ENCODE measurements at regions of chr11 and their contacts with region 1.

Region 1: DNA sequence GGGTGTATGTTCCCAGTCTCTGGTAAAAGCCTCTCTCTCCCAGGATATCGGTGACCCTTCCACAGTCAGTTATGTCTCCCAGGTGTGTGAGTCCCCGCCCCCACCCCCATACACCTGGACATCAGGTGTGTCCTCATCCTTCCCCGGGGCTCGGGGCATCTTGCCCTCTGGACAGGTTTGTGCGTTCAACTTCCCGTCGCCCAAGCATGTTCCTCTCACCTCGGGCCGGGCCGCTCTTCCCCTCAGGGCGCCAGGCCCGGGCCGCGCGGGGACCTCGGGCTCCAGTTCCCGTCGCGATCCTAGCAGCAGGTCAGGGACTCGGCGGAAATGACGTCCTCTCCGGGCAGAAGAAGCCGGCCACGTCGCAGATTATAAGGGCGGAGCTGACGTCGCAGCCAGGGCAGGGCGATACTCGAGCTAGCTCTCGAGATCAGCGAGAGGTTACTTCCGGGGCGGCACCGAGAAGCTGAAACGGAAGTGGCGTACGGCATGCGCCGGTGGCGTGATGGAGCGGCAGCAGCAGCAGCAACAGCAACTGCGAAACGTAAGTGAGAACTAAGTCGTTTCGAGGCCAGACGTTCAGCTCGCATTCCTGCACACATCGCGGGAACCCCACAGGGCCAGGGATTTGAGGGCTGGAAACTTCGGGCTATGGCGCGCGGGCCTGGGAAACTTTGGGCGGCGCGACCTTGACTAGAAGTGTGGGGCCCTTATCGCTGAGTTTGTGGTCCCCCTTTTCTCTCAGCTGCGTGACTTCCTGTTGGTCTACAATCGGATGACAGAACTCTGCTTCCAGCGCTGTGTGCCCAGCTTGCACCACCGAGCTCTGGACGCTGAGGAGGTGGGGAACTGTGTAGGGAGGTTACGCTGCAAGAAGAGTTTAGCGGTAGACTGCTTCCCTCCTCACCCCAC is at the starts of genes ARFIP2 and TIMM10B:
- DNase-seq: peak; percentile 97
- H3K4me3 Mint-ChIP-seq: peak within 1 kb of the TSS; percentile 94
- H3K27ac Mint-ChIP-seq: peak within 1 kb of the TSS; percentile 94
- H3K4me1 Mint-ChIP-seq: peaks cover 40% of the 10 kb centered on the region
- H3K27me3 Mint-ChIP-seq: no peaks in the 10 kb centered on the region
- total RNA-seq, gene ARFIP2: 51.5 and 53.8 TPM in 2 replicates
- total RNA-seq, gene TIMM10B: 38.8 and 42.7 TPM in 2 replicates

Region 2: DNA sequence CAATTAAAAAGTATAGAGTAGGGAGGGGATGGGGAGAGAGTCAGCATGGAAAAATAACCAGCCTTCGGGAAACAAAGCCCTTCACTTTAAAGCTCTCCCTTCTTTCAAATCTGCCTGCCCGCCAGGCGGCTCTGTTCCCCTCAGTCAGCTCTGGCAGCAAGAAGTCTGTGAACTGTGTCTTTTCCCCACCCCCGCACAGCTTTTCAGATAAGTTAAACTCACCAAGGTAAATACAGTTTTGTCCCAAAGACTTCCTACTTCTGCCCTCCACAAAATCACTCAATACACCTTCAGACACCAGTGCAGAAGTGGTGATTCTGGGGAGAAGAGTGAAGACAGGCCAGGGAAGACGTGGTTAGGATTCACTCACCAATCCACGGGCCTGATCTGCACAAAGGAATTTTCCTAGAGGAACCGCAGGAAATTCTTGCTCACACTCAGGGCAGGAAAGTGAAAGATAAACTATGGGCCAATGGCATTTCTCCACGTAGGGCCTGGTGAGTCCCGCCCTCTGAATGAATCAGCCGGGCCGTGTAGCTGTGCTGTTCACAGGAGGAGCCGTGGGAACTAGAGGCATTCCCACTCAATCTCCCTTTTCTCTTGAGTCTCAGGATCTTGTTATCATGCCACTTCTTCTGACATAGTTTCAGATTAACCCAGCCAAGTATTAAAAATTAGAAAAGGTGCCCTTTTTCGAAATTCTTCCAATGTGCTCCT is 796.5 kb before region 1 on chr11 and contains the start of gene TRIM5:
- intact Hi-C with region 1: loop called (anchors 5 kb)
- DNase-seq: peak; percentile 74
- H3K4me3 Mint-ChIP-seq: peak within 1 kb of the TSS; percentile 89
- H3K27ac Mint-ChIP-seq: peak within 1 kb of the TSS; percentile 96
- H3K4me1 Mint-ChIP-seq: peaks cover 57% of the 10 kb centered on the region
- H3K27me3 Mint-ChIP-seq: no peaks in the 10 kb centered on the region
- total RNA-seq, gene TRIM5: 7.9 and 8.6 TPM in 2 replicates

Region 3: GRCh38 chr11:5851002-5851401 is 630.3 kb before region 1 on chr11:
- intact Hi-C with region 1: no loop called
- DNase-seq: no peak
- H3K4me3 Mint-ChIP-seq: no peak overlapping the region
- H3K27ac Mint-ChIP-seq: no peak overlapping the region
- H3K4me1 Mint-ChIP-seq: no peaks in the 10 kb centered on the region
- H3K27me3 Mint-ChIP-seq: peaks cover 1% of the 10 kb centered on the region

Region 4: GRCh38 chr11:6389921-6390724 is 91.1 kb before region 1 on chr11 and contains the start of gene SMPD1:
- intact Hi-C with region 1: loop called (anchors 1 kb)
- DNase-seq: peak; percentile 89
- H3K4me3 Mint-ChIP-seq: peak within 1 kb of the TSS; percentile 86
- H3K27ac Mint-ChIP-seq: peak within 1 kb of the TSS; percentile 98
- H3K4me1 Mint-ChIP-seq: peaks cover 20% of the 10 kb centered on the region
- H3K27me3 Mint-ChIP-seq: peaks cover 7% of the 10 kb centered on the region
- total RNA-seq, gene SMPD1: 8.5 and 9.4 TPM in 2 replicates

Region 5: DNA sequence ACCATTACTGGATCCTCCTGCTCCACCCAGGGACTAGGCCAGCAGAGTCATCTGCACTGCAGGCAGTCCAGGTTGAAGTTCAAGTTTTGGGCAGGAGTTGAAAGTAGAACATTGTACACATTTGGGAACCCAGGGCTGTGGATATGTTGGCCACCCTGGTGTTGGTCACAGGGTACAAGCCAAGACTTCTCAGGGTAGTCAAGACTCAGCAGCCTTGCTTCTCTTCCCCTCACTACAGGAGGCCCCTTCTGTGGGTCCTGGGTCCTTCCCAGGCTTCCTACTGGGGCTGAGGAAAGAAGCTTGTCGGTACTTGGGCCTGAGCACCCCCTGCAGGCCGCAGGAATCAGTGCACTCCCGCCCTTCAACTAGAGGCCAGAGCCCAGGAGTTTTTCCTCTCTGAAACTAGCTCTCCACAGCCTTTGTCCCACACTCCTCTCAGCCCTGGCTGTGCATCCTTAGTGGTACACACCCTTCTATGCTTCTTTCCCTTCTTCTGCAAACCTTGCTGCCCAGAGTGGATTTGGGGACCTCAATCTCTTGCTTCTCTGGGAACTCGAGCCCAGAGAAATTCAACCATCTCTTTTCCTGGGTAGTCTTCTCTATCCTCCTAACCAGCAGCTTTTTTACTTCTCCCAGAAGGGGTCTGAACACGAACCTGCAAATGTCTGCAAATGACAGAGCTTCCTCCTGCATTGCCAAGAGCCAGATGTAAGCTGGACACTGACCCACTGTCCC is 37.8 kb before region 1 on chr11:
- intact Hi-C with region 1: loop called (anchors 2 kb)
- DNase-seq: peak; percentile 39
- H3K4me3 Mint-ChIP-seq: no peak overlapping the region
- H3K27ac Mint-ChIP-seq: no peak overlapping the region
- H3K4me1 Mint-ChIP-seq: no peaks in the 10 kb centered on the region
- H3K27me3 Mint-ChIP-seq: peaks cover 8% of the 10 kb centered on the region

Region 6: DNA sequence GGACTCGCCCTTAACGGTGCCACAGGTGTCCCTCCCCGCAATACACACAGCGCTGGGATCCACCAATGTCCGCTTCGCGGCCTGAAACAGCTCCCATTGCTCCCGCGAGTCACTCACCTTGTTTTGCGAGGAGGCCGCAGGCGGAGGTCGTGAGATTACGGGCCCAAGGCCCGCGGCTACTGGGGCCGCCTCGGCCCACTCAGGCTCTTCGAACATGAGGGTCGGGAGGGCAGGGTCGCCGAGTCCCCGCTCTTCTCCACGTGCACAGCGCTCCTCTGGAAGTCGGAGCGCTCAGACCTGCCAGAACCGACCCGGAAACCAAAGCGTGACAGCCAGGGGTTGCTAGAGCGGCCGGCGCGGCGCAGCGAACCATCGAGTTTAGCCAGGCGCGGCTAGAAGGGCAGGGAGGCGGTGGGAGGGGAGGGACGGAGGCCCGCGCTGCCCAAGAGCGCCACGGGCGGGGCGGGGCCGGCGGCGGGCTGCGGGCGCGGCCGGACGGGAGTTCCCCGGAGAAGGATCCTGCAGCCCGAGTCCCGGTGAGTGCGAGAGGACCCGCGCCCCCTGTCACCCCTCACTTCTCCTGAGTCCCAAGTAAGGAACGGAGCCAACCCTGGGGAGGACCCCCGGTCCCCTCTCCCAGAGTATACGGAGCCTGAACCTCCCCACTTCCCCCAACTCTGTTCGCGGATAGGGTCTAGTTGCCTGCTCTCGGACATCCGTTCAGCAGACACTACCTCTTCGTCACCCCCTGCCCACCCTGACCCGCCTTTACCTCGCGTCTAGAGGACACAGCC is 122.2 kb after region 1 on chr11 and contains the starts of genes ILK and RRP8:
- intact Hi-C with region 1: loop called (anchors 1 kb)
- DNase-seq: peak; percentile 84
- H3K4me3 Mint-ChIP-seq: no peak within 1 kb of the TSS
- H3K27ac Mint-ChIP-seq: no peak within 1 kb of the TSS
- H3K4me1 Mint-ChIP-seq: peaks cover 26% of the 10 kb centered on the region
- H3K27me3 Mint-ChIP-seq: no peaks in the 10 kb centered on the region
- total RNA-seq, gene ILK: 90.1 and 97.5 TPM in 2 replicates
- total RNA-seq, gene RRP8: 38.8 and 40.5 TPM in 2 replicates

Region 7: DNA sequence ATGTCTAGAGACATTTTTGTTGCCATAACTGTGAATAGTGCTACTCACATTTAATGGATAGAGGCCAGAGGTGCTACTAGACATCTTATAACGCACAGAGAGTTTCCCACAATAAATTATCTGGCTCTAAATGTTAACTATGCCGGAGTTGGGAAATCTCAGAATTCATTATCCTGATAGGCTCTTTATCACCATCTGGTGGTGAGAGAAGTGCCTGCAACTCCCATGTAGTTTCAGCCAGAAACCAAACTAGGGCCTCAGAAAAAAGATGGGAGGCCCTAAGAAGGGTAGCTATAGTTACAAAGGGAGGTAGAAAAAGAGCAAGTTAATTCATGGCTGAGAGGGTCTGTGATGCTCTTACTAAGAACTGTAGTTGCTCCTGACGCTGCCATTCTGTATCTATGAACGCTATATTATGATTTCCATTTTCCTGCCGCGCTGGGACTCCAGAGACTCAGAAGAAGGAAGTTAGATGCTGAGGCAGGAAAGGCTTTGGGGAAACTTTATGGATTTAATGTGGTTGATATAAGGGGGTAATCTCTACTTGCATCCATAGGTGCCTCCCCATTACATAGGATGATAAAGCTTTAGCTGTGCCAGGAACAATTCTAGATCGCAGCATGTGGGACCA is 224.8 kb after region 1 on chr11:
- intact Hi-C with region 1: loop called (anchors 1 kb)
- DNase-seq: peak; percentile 19
- H3K4me3 Mint-ChIP-seq: no peak overlapping the region
- H3K27ac Mint-ChIP-seq: no peak overlapping the region
- H3K4me1 Mint-ChIP-seq: peaks cover 7% of the 10 kb centered on the region
- H3K27me3 Mint-ChIP-seq: no peaks in the 10 kb centered on the region